AG04449 (cell line): ENCODE measurements at regions of chr16 and their contacts with region 1.

Region 1: GRCh38 chr16:70759666-70760065 is 41.3 kb downstream of the VAC14 start:
- DNase-seq: no peak
- H3K4me3 ChIP-seq: no peak overlapping the region
- CTCF ChIP-seq: no peak

Region 2: GRCh38 chr16:70679666-70680494 is 79.8 kb before region 1 on chr16:
- CTCF ChIA-PET with region 1: interaction called, 320 read pairs
- POLR2A ChIA-PET with region 1: interaction called, 7 read pairs
- DNase-seq: no peak
- H3K4me3 ChIP-seq: no peak overlapping the region
- CTCF ChIP-seq: peak; percentile 51